Mammary epithelial cell (primary cell): ENCODE measurements at regions of chr4 and their contacts with region 1.

Region 1: GRCh38 chr4:2135083-2135482 is 76.0 kb downstream of the NAT8L start:
- DNase-seq: no peak
- H3K4me3 ChIP-seq: no peak overlapping the region
- H3K27ac ChIP-seq: no peak overlapping the region
- H3K4me1 ChIP-seq: no peaks in the 10 kb centered on the region
- H3K27me3 ChIP-seq: no peaks in the 10 kb centered on the region
- CTCF ChIP-seq: no peak

Region 2: GRCh38 chr4:2041234-2042130 is 93.6 kb before region 1 on chr4:
- CTCF ChIA-PET with region 1: no interaction called
- dilution Hi-C with region 1: no loop called
- in situ Hi-C with region 1: no loop called
- intact Hi-C with region 1: no loop called
- DNase-seq: peak; percentile 60
- H3K4me3 ChIP-seq: peak overlapping the region; percentile 72 to 83 (median 82)
- H3K27ac ChIP-seq: no peak overlapping the region
- H3K4me1 ChIP-seq: peaks cover 22% of the 10 kb centered on the region
- H3K27me3 ChIP-seq: peaks cover 4% of the 10 kb centered on the region
- CTCF ChIP-seq: no peak

Region 3: DNA sequence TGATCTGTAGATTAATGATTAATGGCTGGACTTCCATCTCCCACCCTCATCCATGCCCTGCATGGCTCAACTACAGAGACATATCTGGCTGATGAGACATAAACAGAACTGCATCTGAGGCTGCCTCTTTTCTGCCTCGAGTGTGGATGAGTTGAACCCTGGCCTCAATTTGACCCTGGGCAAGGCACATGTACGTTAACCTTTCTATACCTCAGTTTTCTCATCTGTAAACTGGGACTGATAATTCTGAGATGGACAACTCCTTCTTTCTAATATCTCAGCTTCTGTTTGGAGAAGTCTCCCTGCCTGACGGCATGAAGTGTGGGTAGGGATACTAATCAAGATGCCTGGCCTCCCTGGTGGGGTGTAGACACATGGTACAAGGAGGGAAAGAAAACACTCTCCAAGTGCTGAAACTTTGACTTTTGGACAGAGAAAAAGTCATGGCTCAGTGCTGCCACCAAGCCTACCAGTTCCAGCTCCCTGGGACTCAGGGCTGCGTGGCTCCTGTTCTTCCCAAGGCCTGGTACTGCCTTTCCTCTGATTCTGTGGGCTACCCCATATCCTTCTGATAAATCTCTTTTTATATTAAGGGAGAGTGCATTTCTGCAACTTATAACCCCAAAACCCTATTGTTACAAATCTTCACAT is 42.5 kb after region 1 on chr4:
- CTCF ChIA-PET with region 1: no interaction called
- dilution Hi-C with region 1: loop called (anchors 5 kb)
- in situ Hi-C with region 1: no loop called
- intact Hi-C with region 1: no loop called
- DNase-seq: no peak
- H3K4me3 ChIP-seq: no peak overlapping the region
- H3K27ac ChIP-seq: no peak overlapping the region
- H3K4me1 ChIP-seq: no peaks in the 10 kb centered on the region
- H3K27me3 ChIP-seq: peaks cover 1% of the 10 kb centered on the region
- CTCF ChIP-seq: peak; percentile 21 to 28